ENCODE measurements at regions of chr6 and their contacts with region 1.

Region 1: DNA sequence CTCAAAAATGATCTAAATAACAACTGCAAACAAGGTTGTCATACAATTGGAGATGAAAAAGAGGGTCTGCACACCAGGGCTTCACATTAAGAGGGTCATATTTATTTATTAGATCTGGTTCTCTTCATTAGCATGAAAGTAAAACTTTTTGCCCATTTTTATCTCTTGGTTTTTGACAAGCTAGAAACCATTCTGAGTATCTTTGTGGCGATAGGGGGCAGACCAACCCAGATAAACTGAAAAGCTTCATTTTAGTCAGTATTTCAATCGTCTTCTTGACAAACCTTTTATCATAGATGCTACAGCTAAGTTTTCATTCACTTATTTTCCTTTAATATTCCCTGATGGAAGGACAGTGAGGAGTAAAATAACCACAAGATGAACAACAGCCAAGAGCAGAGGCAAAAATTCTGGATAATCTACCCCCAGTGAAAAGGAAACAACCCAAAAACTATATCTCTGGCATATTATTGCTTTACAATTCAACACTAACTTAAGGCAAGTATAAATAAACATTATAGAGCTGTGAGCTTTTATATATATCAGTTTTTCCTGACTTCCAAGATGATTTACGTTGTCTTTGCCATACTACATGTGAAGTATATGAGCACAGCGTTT is 45.2 kb downstream of the THEMIS start:
- DNase-seq: no peak
- H3K4me3 ChIP-seq: no peak overlapping the region
- H3K27ac ChIP-seq: no peak overlapping the region
- H3K4me1 ChIP-seq: no peaks in the 10 kb centered on the region
- H3K27me3 ChIP-seq: no peaks in the 10 kb centered on the region
- CTCF ChIP-seq: peak in 4 of 5 experiments; percentile 22 to 33 (median 24)
- EP300 ChIP-seq: no peak
- POLR2A ChIP-seq: no peak

Region 2: GRCh38 chr6:127841811-127842210 is 13.8 kb before region 1 on chr6:
- in situ Hi-C with region 1: no loop called
- intact Hi-C with region 1: loop called (anchors 2 kb)
- DNase-seq: no peak
- H3K4me3 ChIP-seq: no peak overlapping the region
- H3K27ac ChIP-seq: no peak overlapping the region
- H3K4me1 ChIP-seq: no peaks in the 10 kb centered on the region
- H3K27me3 ChIP-seq: no peaks in the 10 kb centered on the region
- CTCF ChIP-seq: no peak
- EP300 ChIP-seq: no peak
- POLR2A ChIP-seq: no peak